Activated CD4-positive, alpha-beta memory T cell treated with anti-CD3 and anti-CD28 coated beads for 36 hours (primary cell): ENCODE measurements at regions of chr2 and their contacts with region 1.

Region 1: DNA sequence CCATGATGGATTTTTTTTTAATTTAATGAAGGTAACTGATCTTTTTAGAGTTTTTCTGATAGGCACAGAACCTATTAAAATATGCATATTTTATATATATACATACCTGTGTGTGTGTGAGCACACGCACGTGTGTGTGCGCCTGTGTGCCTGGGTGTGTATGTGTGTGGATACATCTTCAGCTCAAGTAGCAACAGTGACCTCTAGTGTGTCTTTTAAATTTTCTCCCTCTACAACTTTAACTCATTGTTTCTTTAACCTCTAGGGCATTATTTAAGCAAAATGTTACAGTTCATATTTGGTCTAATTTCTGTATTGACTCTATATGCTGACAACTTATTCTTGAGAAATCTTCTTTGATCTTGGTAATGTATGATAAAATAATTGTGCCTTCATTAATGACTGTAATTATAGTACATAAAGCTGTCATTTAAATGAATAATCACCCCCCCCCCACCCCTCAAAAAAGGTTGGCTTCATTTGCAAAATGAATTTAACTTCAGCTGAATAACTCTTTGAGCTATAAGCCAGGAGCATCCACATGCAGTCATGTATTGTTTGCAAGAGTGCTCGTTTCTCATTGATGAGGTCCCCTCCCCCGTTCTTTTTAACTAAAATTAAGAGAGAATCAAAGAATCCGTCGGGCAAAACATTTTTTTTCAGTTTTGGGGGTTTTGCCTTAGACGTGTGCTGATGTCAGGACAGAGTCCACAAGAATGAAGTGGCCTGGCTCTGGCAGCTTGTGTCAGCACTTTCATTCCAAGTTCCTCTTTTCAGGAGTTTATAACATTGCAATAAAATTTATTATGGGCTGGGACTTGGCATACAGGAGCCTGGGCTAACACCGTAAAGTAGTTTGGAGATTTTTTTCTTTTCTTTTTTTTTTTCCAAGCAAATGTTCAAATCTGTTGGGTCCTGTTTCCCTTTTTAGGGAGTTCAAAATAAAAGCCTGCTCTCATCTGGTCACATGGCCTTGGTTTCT is 80.0 kb downstream of the ETAA1 start:
- DNase-seq: no peak
- H3K4me3 Mint-ChIP-seq: no peak overlapping the region
- H3K27ac Mint-ChIP-seq: no peak overlapping the region
- H3K4me1 Mint-ChIP-seq: no peaks in the 10 kb centered on the region
- H3K27me3 Mint-ChIP-seq: peaks cover 23% of the 10 kb centered on the region

Region 2: DNA sequence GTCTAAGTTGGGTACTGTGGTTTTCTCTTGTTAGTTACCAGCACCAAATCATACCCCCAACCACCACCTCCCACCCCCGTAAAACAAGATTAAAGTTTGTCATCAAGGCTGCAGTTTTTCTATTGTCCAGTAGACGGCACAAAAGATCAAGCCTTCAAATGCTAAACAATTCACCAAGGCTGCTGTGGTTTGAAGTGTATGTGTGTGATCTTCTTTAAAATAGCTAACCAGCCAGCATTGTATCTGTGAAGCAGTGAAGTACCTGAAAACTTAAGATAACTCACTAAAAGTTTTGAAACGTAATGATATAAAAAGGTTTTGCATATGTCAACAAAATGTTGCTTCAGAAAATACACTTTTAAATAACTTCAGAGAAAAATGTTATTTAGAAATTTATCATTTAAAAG is 1048.0 kb before region 1 on chr2:
- CTCF ChIA-PET with region 1: no interaction called
- POLR2A ChIA-PET with region 1: no interaction called
- intact Hi-C with region 1: loop called (anchors 5 kb)
- DNase-seq: no peak
- H3K4me3 Mint-ChIP-seq: no peak overlapping the region
- H3K27ac Mint-ChIP-seq: no peak overlapping the region
- H3K4me1 Mint-ChIP-seq: peaks cover 13% of the 10 kb centered on the region
- H3K27me3 Mint-ChIP-seq: peaks cover 66% of the 10 kb centered on the region

Region 3: GRCh38 chr2:67108231-67108630 is 368.9 kb before region 1 on chr2:
- CTCF ChIA-PET with region 1: no interaction called
- POLR2A ChIA-PET with region 1: no interaction called
- intact Hi-C with region 1: loop called (anchors 2 kb)
- DNase-seq: no peak
- H3K4me3 Mint-ChIP-seq: no peak overlapping the region
- H3K27ac Mint-ChIP-seq: no peak overlapping the region
- H3K4me1 Mint-ChIP-seq: no peaks in the 10 kb centered on the region
- H3K27me3 Mint-ChIP-seq: no peaks in the 10 kb centered on the region